Psoas muscle (tissue), 8 donors: ENCODE measurements at regions of chr4 and their contacts with region 1.

Region 1: GRCh38 chr4:34771632-34772031 is 1472.7 kb downstream of the ARAP2 start:
- DNase-seq: no peak
- ATAC-seq: no peak
- H3K4me3 ChIP-seq: no peak overlapping the region
- H3K27ac ChIP-seq: no peak overlapping the region
- H3K4me1 ChIP-seq: no peaks in the 10 kb centered on the region
- H3K27me3 ChIP-seq: no peaks in the 10 kb centered on the region
- CTCF ChIP-seq: no peak

Region 2: GRCh38 chr4:34826660-34827059 is 55.0 kb after region 1 on chr4:
- intact Hi-C with region 1: loop called in 1 of 2 experiments (anchors 5 kb)
- DNase-seq: no peak
- ATAC-seq: no peak
- H3K4me3 ChIP-seq: no peak overlapping the region
- H3K27ac ChIP-seq: no peak overlapping the region
- H3K4me1 ChIP-seq: no peaks in the 10 kb centered on the region
- H3K27me3 ChIP-seq: no peaks in the 10 kb centered on the region
- CTCF ChIP-seq: no peak